ENCODE measurements at regions of chr6 and their contacts with region 1.

Region 1: DNA sequence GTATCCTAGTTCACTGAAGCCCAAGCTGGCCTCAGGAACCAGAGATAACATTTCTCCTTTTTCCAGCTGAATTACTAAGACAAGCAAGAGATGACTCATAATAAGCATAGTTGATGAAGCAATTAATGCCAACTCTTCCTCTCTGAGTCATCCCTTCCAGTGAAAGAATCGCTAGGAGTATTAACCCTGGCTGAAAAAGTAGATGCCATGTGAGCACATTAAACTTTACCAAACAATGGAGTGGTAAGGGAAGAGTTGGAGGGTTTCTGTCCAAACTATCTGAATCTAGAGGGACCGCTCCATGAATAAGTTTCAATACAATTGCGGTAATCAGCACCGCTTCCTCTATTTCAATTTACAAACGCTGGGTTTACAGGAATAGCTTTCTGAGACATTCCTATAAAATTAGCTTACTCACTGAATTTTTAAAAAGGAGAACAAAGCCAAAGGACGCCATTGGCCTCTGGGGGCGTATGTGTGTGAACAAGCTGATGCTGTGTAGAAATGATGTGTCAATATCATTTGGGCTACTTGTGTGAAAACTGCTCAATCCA is 48.3 kb downstream of the ATXN1 start:
- DNase-seq: no peak
- H3K4me3 Mint-ChIP-seq: peak overlapping the region; percentile 82
- H3K27ac Mint-ChIP-seq: peak overlapping the region; percentile 92
- H3K4me1 Mint-ChIP-seq: peaks cover 43% of the 10 kb centered on the region
- H3K27me3 Mint-ChIP-seq: no peaks in the 10 kb centered on the region

Region 2: GRCh38 chr6:16319813-16320532 is 393.0 kb before region 1 on chr6:
- intact Hi-C with region 1: loop called (anchors 5 kb)
- DNase-seq: peak; percentile 90
- H3K4me3 Mint-ChIP-seq: peak overlapping the region; percentile 73
- H3K27ac Mint-ChIP-seq: peak overlapping the region; percentile 84
- H3K4me1 Mint-ChIP-seq: peaks cover 66% of the 10 kb centered on the region
- H3K27me3 Mint-ChIP-seq: no peaks in the 10 kb centered on the region

Region 3: GRCh38 chr6:16670183-16670582 is 42.8 kb before region 1 on chr6:
- intact Hi-C with region 1: loop called (anchors 2 kb)
- DNase-seq: no peak
- H3K4me3 Mint-ChIP-seq: peak overlapping the region; percentile 70
- H3K27ac Mint-ChIP-seq: peak overlapping the region; percentile 97
- H3K4me1 Mint-ChIP-seq: peaks cover 64% of the 10 kb centered on the region
- H3K27me3 Mint-ChIP-seq: no peaks in the 10 kb centered on the region

Region 4: DNA sequence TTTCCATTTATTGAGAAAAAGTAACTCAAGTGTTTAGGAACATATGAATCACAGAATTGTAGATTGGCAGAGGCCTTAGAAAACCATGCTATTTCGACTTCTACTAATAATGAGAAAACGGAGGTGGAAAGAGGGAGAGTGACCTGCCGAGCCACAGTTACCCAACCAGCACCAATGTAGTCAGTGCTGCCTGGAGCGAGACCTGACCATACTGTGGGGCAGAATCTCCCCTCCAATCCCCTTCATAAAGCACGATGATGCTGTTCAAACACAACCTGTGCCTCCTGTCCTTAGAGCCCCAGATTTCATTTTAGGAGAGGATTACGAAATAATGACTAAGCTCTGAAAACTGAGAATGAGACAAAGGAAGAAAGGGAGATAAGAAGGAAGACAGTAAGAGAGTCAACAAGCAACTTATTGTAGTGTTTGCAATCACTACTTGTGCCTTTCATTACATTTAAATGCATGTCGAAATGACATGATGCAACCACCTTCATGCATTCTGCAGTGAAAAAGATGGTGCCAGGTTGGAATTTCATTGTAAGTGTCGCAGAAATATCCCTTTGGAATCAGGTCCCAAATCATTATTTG is 22.3 kb before region 1 on chr6:
- intact Hi-C with region 1: loop called (anchors 1 kb)
- DNase-seq: peak; percentile 74
- H3K4me3 Mint-ChIP-seq: peak overlapping the region; percentile 81
- H3K27ac Mint-ChIP-seq: peak overlapping the region; percentile 99
- H3K4me1 Mint-ChIP-seq: peaks cover 73% of the 10 kb centered on the region
- H3K27me3 Mint-ChIP-seq: no peaks in the 10 kb centered on the region

Region 5: GRCh38 chr6:16723826-16724225 is 10.8 kb after region 1 on chr6:
- intact Hi-C with region 1: loop called (anchors 1 kb)
- DNase-seq: no peak
- H3K4me3 Mint-ChIP-seq: no peak overlapping the region
- H3K27ac Mint-ChIP-seq: peak overlapping the region; percentile 56
- H3K4me1 Mint-ChIP-seq: peaks cover 49% of the 10 kb centered on the region
- H3K27me3 Mint-ChIP-seq: no peaks in the 10 kb centered on the region

Region 6: GRCh38 chr6:16982807-16983206 is 269.8 kb after region 1 on chr6:
- intact Hi-C with region 1: no loop called
- DNase-seq: no peak
- H3K4me3 Mint-ChIP-seq: no peak overlapping the region
- H3K27ac Mint-ChIP-seq: no peak overlapping the region
- H3K4me1 Mint-ChIP-seq: no peaks in the 10 kb centered on the region
- H3K27me3 Mint-ChIP-seq: peaks cover 33% of the 10 kb centered on the region

Measured in activated CD4-positive, alpha-beta T cell treated with anti-CD3 and anti-CD28 coated beads, Interleukin-2, amount 10 ng/mL, durations not matched to agents 24 days and 14 days (primary cell).